Gastrocnemius medialis (tissue), 4 donors: ENCODE measurements at regions of chr1 and their contacts with region 1.

Region 1: DNA sequence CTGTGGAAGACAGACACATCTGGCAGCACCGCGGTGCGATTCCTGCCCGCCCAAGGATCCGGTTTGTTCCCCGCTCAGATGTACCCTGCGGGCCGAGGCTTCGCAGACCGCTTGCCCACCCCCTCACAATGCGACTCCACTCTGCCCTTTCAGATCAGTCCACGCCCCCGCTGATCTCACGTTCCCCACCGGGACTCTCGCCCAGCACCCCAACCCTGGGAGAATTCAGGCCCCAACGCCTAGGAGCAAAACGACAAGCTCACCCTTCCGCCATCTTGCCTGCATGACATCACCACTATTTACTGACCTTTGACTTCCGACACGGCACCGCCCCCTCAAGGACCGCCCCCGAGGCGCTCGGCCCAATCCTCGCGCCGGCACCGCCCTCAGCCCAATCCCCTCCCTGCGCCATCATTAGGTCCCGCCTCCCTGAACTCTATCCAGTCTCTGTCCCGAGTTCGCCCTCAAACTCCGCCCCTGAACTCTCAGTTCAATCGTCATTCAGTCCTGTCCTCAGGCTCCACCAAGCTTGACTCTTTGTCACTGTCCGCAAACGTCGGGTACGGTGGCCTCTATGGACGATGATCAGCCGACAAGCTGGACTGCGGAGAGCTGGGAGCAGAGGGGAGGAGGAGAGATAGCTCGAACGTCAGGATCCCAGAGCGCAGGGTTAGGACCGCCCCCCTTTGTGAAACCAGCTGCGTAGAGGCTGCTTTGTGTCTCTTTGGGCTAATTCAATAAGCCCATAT is at the start of gene BSDC1:
- DNase-seq: peak; percentile 98
- ATAC-seq: peak; percentile 96 to 98
- H3K4me3 ChIP-seq: peak within 1 kb of the TSS; percentile 77 to 87 (median 84)
- H3K27ac ChIP-seq: peak within 1 kb of the TSS; percentile 92 to 97 (median 94)
- H3K4me1 ChIP-seq: peaks cover 25 to 39% of the 10 kb centered on the region in 2 donors
- H3K27me3 ChIP-seq: no peaks in the 10 kb centered on the region
- CTCF ChIP-seq: no peak
- POLR2A ChIP-seq: peak; percentile 93 to 95
- total RNA-seq, gene BSDC1: 53.8 to 77.8 (median 62.1) TPM

Region 2: DNA sequence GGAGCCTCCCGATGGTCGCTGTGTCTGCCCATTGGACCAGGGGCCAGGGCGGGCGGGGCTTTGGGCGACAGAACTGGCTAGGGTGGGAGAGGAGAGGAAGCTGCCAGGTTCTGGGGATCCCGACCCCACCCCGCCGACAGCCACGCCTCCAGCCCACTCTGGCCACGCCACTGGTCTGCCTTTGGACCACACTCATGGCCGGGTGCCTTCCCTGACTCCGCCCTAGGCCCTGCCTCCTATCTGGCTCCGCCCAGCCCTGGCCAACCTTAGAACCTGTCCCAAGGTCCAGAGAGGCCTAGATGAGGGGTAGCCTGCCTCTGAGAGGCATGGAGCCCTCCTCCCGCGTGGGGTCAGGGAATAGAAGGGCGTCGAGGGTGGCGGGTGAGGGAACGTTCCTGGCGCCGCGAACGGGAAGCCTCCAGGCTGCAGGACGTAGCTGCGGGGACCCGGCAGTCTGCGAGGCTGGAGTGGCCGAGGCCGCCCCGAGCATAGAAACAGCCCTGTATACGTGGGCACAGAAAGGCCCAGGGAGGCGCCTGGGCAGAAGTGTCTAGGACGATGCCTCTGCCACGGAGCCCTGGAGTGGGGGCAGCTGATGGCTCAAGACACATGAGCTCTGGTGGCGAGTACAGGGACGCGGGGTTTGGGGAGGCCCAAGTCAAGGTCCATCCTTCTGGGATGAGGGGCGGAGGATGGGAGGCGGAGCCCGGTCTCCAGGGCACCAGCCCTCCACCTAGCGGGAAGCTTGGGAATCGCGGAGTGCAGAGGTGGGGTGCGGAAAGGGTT is 679.0 kb before region 1 on chr1:
- in situ Hi-C with region 1: no loop called
- intact Hi-C with region 1: no loop called
- DNase-seq: peak; percentile 88 to 94
- ATAC-seq: peak; percentile 89
- H3K4me3 ChIP-seq: peak overlapping the region; percentile 50 to 80 (median 64)
- H3K27ac ChIP-seq: peak overlapping the region; percentile 84 to 97 (median 94)
- H3K4me1 ChIP-seq: peaks cover 4 to 22% of the 10 kb centered on the region in 2 donors
- H3K27me3 ChIP-seq: no peaks in the 10 kb centered on the region
- CTCF ChIP-seq: peak; percentile 79 to 93 (median 88)
- POLR2A ChIP-seq: peak; percentile 74 to 88

Region 3: GRCh38 chr1:32351399-32352238 is 42.7 kb before region 1 on chr1:
- in situ Hi-C with region 1: no loop called
- intact Hi-C with region 1: loop called (anchors 1 kb)
- DNase-seq: peak; percentile 94 to 95
- ATAC-seq: peak; percentile 86 to 90
- H3K4me3 ChIP-seq: peak overlapping the region; percentile 65 to 87 (median 78)
- H3K27ac ChIP-seq: peak overlapping the region; percentile 82 to 95 (median 93)
- H3K4me1 ChIP-seq: peaks cover 19 to 24% of the 10 kb centered on the region in 2 donors
- H3K27me3 ChIP-seq: no peaks in the 10 kb centered on the region
- CTCF ChIP-seq: peak in 2 of 5 experiments; percentile 4 to 44
- POLR2A ChIP-seq: peak; percentile 97 to 98

Region 4: GRCh38 chr1:32413507-32414185 is 19.3 kb after region 1 on chr1:
- in situ Hi-C with region 1: no loop called
- intact Hi-C with region 1: no loop called
- DNase-seq: peak; percentile 20 to 31
- ATAC-seq: peak in 1 of 2 donors; percentile 72
- H3K4me3 ChIP-seq: no peak overlapping the region
- H3K27ac ChIP-seq: no peak overlapping the region
- H3K4me1 ChIP-seq: no peaks in the 10 kb centered on the region
- H3K27me3 ChIP-seq: no peaks in the 10 kb centered on the region
- CTCF ChIP-seq: peak; percentile 57 to 74 (median 68)
- POLR2A ChIP-seq: no peak